Activated naive CD4-positive, alpha-beta T cell treated with anti-CD3 and anti-CD28 coated beads for 36 hours (primary cell): ENCODE measurements at regions of chr3 and their contacts with region 1.

Region 1: DNA sequence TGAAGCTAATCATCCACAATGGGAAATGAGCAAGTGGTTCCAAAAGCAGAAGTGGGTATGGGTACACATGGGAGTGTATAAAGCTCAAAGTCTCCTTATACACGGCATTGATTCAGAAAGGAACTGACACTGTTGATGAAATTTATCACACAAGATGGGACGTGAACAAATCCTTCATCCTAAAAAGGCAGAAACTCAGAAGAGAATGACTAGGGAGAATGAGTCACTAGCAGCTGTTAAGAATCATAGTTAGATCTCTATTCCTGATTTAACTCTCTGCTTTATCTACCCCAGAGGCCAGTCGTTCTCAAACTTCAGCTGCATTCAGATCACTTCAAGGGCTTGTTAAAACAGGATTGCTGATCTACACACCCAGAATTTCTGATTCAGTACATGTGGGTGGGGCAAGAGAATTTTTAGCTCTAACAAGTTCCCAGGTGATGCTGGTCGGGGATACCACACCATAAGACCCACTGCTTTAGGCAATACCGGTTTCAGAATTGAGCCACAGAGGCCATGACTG is 97.7 kb upstream of the PHLDB2 start:
- DNase-seq: peak; percentile 54
- H3K4me3 Mint-ChIP-seq: no peak overlapping the region
- H3K27ac Mint-ChIP-seq: peak overlapping the region; percentile 68
- H3K4me1 Mint-ChIP-seq: peaks cover 18% of the 10 kb centered on the region
- H3K27me3 Mint-ChIP-seq: no peaks in the 10 kb centered on the region

Region 2: DNA sequence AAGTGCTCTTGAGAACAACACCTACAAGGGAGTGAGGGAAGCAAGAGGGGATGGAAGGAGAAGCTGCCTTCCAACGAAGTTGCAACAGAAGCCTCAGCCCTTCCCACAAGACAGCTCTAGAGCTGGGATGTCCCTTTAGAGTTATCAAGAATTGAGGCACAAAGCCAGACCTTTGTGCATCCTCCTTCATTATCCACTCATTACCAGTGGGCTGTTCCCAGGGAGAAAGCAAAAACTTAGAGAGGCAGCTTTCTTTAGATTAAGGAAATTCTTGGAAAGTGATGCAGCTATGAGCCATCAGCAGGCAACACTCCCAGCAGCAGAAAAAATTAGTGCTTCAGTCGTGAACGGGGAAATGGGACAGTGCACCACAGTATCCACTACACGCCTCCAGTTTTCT is 229.9 kb before region 1 on chr3:
- CTCF ChIA-PET with region 1: no interaction called
- intact Hi-C with region 1: no loop called
- DNase-seq: no peak
- H3K4me3 Mint-ChIP-seq: no peak overlapping the region
- H3K27ac Mint-ChIP-seq: no peak overlapping the region
- H3K4me1 Mint-ChIP-seq: peaks cover 6% of the 10 kb centered on the region
- H3K27me3 Mint-ChIP-seq: no peaks in the 10 kb centered on the region

Region 3: GRCh38 chr3:111700054-111700453 is 61.3 kb before region 1 on chr3:
- CTCF ChIA-PET with region 1: no interaction called
- intact Hi-C with region 1: loop called (anchors 1 kb)
- DNase-seq: no peak
- H3K4me3 Mint-ChIP-seq: no peak overlapping the region
- H3K27ac Mint-ChIP-seq: peak overlapping the region; percentile 50
- H3K4me1 Mint-ChIP-seq: peaks cover 31% of the 10 kb centered on the region
- H3K27me3 Mint-ChIP-seq: no peaks in the 10 kb centered on the region